Activated B cell treated with CpG ODN at 0.5 μM for 24 hours (primary cell): ENCODE measurements at regions of chr1 and their contacts with region 1.

Region 1: DNA sequence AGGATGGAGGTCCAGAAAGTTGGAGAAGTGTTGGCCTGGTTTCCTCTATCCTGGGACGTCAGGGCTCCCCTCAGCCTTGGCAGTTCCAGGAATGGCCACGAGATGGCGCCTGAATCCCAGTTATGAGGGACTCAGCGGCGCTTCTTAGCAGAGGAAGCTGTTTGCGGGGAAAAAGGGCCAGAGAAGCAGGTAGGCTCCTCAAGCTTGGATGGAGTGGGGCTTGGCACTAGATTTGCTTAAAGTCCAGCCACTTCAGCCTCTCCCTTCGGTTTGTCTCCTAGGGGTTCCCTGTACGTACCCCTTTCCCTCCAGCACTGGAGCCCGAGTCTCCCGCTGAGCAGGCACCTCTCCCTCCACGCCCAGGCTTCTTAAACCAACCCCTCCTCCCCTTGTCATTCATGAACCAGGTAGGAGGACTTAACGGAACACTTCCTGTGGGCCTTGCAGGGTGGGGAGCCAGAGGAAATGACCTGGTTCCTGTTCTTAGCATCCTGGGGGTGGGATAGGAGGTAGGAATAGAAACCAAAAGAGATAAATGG is 32.0 kb upstream of the TENT5B start:
- DNase-seq: peak; percentile 85
- ATAC-seq: peak; percentile 96
- H3K4me3 Mint-ChIP-seq: peak overlapping the region; percentile 28
- H3K27ac Mint-ChIP-seq: no peak overlapping the region
- H3K4me1 Mint-ChIP-seq: peaks cover 16% of the 10 kb centered on the region
- H3K27me3 Mint-ChIP-seq: no peaks in the 10 kb centered on the region
- CTCF ChIP-seq: peak; percentile 68

Region 2: GRCh38 chr1:26799479-26800142 is 245.1 kb before region 1 on chr1:
- CTCF ChIA-PET with region 1: no interaction called
- POLR2A ChIA-PET with region 1: no interaction called
- intact Hi-C with region 1: no loop called
- DNase-seq: no peak
- ATAC-seq: no peak
- H3K4me3 Mint-ChIP-seq: no peak overlapping the region
- H3K27ac Mint-ChIP-seq: peak overlapping the region; percentile 50
- H3K4me1 Mint-ChIP-seq: peaks cover 8% of the 10 kb centered on the region
- H3K27me3 Mint-ChIP-seq: no peaks in the 10 kb centered on the region
- CTCF ChIP-seq: no peak

Region 3: DNA sequence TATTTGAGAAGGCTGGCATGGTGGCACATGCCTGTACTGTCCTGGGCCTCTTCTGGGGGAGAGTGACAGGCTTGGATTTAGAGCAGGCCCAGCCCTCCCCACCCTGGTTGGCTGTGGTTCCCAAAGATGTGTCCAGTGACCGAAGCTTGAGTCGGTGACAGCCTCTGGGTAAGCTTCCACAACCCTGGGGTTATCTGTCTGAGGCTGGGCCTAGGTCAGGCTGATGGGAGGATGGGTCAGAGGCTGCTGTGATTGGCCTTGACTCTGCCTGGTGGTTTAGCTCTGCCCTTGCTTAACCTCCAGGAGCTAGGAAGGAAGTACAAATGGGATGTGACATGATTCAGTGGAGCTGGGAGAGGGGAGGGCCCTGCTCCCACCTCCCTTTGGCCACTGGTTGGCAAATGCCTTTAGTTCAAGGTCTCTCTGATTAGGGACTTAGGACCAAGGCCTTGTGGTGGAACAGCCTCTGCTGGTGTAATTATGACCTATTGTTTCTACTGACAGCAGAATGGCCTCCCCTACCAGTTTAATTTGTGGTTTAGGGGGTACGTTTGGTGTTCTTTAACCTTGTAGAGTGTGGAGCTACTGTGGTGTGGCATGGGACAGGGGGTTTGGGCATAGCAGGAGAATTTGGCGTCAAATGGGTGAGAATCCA is 106.6 kb before region 1 on chr1:
- CTCF ChIA-PET with region 1: no interaction called
- POLR2A ChIA-PET with region 1: no interaction called
- intact Hi-C with region 1: no loop called
- DNase-seq: no peak
- ATAC-seq: no peak
- H3K4me3 Mint-ChIP-seq: no peak overlapping the region
- H3K27ac Mint-ChIP-seq: no peak overlapping the region
- H3K4me1 Mint-ChIP-seq: peaks cover 2% of the 10 kb centered on the region
- H3K27me3 Mint-ChIP-seq: no peaks in the 10 kb centered on the region
- CTCF ChIP-seq: no peak

Region 4: GRCh38 chr1:26998429-26999300 is 46.0 kb before region 1 on chr1:
- CTCF ChIA-PET with region 1: interaction called, 41 read pairs
- POLR2A ChIA-PET with region 1: no interaction called
- intact Hi-C with region 1: loop called (anchors 1 kb)
- DNase-seq: no peak
- ATAC-seq: no peak
- H3K4me3 Mint-ChIP-seq: no peak overlapping the region
- H3K27ac Mint-ChIP-seq: no peak overlapping the region
- H3K4me1 Mint-ChIP-seq: peaks cover 36% of the 10 kb centered on the region
- H3K27me3 Mint-ChIP-seq: peaks cover 16% of the 10 kb centered on the region
- CTCF ChIP-seq: no peak

Region 5: DNA sequence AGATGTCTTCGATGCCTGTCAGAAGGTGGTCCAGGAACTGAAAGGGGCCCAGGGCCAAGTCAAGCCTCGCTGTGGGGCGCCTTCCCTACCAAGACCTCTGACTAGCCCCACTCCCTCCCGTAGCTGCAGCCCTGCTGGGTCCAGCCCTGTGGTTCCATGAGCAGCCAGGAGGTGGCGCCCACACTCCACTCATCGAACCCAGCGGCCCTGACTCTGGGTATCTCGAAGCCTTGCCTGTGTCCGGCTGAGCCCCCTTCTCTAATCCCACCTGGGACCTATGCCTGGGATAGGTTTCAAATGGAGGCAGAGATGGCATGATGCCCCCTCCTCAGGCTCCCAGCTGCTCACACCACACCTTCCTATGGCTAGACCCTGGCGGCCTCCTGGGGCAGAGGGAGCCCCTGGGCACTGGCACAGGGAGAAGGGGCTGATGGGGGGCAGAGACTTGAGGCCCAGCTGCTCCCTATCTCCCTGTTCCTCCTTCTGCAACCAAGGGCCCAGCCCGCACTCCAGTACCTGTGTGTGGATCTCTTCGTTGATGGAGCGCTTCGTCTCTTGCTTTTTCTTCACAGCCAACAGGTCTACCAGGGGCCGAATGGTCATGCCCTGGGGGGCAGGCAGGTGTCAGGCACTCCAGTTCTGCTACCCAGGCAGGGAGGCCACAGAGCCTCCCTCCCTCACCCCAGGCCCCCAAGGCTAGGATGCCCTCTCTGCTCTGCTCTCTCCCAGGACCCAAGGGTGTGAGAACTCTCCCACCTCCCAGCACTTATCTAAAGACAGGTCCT is 58.2 kb after region 1 on chr1:
- CTCF ChIA-PET with region 1: interaction called, 290 read pairs
- POLR2A ChIA-PET with region 1: interaction called, 7 read pairs
- intact Hi-C with region 1: no loop called
- DNase-seq: peak; percentile 85
- ATAC-seq: peak; percentile 33
- H3K4me3 Mint-ChIP-seq: no peak overlapping the region
- H3K27ac Mint-ChIP-seq: no peak overlapping the region
- H3K4me1 Mint-ChIP-seq: peaks cover 41% of the 10 kb centered on the region
- H3K27me3 Mint-ChIP-seq: no peaks in the 10 kb centered on the region
- CTCF ChIP-seq: no peak

Region 6: DNA sequence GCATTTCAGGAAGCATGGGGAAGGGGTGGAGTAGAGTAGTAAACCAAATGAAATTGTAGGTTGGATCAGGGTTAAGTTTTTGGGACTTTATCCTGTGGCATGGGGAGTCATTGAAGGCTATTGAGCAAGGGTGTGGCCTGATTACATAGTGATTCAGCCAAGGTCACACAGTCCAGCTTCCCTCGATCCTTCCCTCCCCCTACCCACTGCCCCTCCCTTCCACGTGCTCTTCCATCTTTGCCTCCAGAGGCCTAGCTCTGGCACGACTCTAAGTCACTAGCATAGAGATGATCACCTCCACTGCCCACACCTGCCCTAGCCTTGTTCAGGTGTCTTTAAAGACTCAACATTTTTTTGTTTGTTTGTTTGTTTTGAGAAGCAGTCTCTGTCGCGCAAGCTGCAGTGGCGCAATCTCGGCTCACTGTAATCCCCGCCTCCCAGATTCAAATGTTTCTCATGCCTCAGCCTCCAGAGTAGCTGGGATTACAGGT is 147.4 kb after region 1 on chr1:
- CTCF ChIA-PET with region 1: interaction called, 11 read pairs
- POLR2A ChIA-PET with region 1: no interaction called
- intact Hi-C with region 1: no loop called
- DNase-seq: no peak
- ATAC-seq: no peak
- H3K4me3 Mint-ChIP-seq: no peak overlapping the region
- H3K27ac Mint-ChIP-seq: no peak overlapping the region
- H3K4me1 Mint-ChIP-seq: no peaks in the 10 kb centered on the region
- H3K27me3 Mint-ChIP-seq: peaks cover 2% of the 10 kb centered on the region
- CTCF ChIP-seq: no peak

Region 7: DNA sequence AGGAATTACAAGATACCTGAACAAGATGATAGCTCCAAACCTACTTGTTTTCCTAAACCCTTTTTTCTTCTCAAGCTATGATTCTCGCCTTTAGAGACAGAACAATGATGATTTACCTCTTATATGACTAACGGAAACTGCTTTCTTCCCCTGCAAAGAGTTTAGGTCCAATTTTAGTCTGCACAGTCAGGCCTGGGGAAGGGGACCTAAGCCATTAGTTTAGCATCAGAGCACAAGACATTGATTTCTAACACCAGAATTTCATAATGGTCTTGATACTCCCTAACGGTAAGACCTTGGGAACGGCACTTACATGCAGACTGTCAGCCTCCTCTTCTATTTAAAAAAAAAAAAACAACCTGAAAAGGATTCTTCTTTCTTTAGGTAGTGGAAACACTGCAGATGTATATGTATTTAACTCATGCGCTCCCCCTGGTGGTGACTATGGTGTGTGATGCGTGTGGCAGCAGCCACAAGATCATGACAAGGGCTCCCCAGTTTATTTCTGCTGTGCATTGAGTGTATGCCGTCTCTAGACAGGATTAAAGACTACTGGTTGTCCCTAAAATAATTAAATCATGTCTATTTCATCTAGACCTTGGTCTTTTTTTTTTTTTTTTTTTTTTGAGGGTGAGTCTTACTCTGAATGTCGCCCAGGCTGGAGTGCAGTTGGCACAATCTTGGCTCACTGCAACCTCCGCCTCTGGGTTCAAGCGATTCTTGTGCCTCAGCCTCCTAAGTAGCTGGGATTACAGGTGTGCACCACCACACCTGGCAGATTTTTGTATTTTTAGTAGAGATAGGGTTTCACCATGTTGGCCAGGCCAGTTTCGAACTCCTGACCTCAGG is 240.0 kb after region 1 on chr1:
- CTCF ChIA-PET with region 1: interaction called, 16 read pairs
- POLR2A ChIA-PET with region 1: no interaction called
- intact Hi-C with region 1: loop called (anchors 1 kb)
- DNase-seq: peak; percentile 64
- ATAC-seq: peak; percentile 96
- H3K4me3 Mint-ChIP-seq: no peak overlapping the region
- H3K27ac Mint-ChIP-seq: peak overlapping the region; percentile 13
- H3K4me1 Mint-ChIP-seq: peaks cover 12% of the 10 kb centered on the region
- H3K27me3 Mint-ChIP-seq: no peaks in the 10 kb centered on the region
- CTCF ChIP-seq: no peak

Region 8: GRCh38 chr1:27392096-27392777 is 347.6 kb after region 1 on chr1 and contains the start of gene GPR3:
- CTCF ChIA-PET with region 1: interaction called, 8 read pairs
- POLR2A ChIA-PET with region 1: no interaction called
- intact Hi-C with region 1: loop called (anchors 1 kb)
- DNase-seq: peak; percentile 91
- ATAC-seq: peak; percentile 91
- H3K4me3 Mint-ChIP-seq: peak within 1 kb of the TSS; percentile 82
- H3K27ac Mint-ChIP-seq: peak within 1 kb of the TSS; percentile 60
- H3K4me1 Mint-ChIP-seq: peaks cover 18% of the 10 kb centered on the region
- H3K27me3 Mint-ChIP-seq: no peaks in the 10 kb centered on the region
- CTCF ChIP-seq: no peak
- total RNA-seq, gene GPR3: 0.11 TPM in 1 of 2 replicates, not detected in the other